Naive thymus-derived CD8-positive, alpha-beta T cell (primary cell): ENCODE measurements at regions of chr12 and their contacts with region 1.

Region 1: DNA sequence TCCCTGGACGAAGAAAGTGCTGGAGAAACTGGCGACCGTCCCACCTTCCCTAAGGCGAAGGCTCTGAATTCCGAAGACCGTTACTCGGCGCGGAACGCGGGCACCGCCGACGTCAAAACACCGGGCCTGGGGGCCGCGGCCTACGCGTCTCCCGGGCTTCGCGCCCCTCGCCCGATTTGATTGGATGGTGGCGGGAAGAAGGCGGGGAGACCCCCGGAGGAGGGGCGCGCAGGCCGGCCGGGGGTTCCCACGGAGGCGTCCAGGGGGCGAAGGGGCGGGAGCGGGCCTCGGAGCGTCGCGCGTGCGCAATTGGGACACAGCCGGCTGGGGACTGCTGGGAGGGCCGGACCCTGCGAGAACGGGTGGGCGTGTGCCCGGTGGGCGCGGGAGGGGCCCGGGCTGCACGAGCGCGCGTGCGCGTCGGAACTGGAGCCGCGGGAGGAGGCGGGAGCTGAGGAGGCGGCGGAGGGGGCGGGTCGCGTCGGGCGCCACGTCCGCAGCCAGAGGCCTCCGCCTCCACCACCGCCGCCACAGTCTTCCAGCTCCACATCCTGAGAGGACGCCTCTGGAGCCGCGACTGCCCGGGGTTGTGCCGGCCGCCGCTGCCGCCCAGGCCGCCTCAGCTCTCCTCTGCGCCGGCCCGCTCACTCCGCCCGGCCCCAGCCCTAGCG is at the start of gene TMEM263:
- DNase-seq: peak; percentile 90 to 96 (median 93)
- ATAC-seq: peak; percentile 76 to 79
- H3K4me3 Mint-ChIP-seq: peak within 1 kb of the TSS; percentile 94 to 100 (median 98)
- H3K27ac Mint-ChIP-seq: peak within 1 kb of the TSS; percentile 93 to 98 (median 97)
- H3K4me1 Mint-ChIP-seq: peaks cover 19 to 38% (median 30%) of the 10 kb centered on the region in 4 donors
- H3K27me3 Mint-ChIP-seq: no peaks in the 10 kb centered on the region
- polyA plus RNA-seq, gene TMEM263: 38.7 to 54.7 (median 38.9) TPM

Region 2: GRCh38 chr12:106357549-106358395 is 597.7 kb before region 1 on chr12 and contains the start of gene POLR3B:
- POLR2A ChIA-PET with region 1: interaction called, 16 read pairs
- DNase-seq: peak; percentile 90 to 100 (median 96)
- ATAC-seq: peak; percentile 93 to 94
- H3K4me3 Mint-ChIP-seq: peak within 1 kb of the TSS; percentile 82 to 97 (median 93)
- H3K27ac Mint-ChIP-seq: peak within 1 kb of the TSS; percentile 80 to 97 (median 93)
- H3K4me1 Mint-ChIP-seq: peaks cover 10 to 20% (median 19%) of the 10 kb centered on the region in 4 donors
- H3K27me3 Mint-ChIP-seq: peaks cover 0 to 3% (median 0%) of the 10 kb centered on the region in 5 donors
- polyA plus RNA-seq, gene POLR3B: 3.1 to 6.2 (median 4.2) TPM

Region 3: GRCh38 chr12:106981788-106982187 is 26.3 kb after region 1 on chr12:
- POLR2A ChIA-PET with region 1: interaction called, 26 read pairs
- DNase-seq: no peak
- ATAC-seq: no peak
- H3K4me3 Mint-ChIP-seq: no peak overlapping the region
- H3K27ac Mint-ChIP-seq: peak overlapping the region in 4 of 10 donors; percentile 36 to 75 (median 60)
- H3K4me1 Mint-ChIP-seq: peaks cover 35 to 41% (median 38%) of the 10 kb centered on the region in 4 donors
- H3K27me3 Mint-ChIP-seq: no peaks in the 10 kb centered on the region

Region 4: DNA sequence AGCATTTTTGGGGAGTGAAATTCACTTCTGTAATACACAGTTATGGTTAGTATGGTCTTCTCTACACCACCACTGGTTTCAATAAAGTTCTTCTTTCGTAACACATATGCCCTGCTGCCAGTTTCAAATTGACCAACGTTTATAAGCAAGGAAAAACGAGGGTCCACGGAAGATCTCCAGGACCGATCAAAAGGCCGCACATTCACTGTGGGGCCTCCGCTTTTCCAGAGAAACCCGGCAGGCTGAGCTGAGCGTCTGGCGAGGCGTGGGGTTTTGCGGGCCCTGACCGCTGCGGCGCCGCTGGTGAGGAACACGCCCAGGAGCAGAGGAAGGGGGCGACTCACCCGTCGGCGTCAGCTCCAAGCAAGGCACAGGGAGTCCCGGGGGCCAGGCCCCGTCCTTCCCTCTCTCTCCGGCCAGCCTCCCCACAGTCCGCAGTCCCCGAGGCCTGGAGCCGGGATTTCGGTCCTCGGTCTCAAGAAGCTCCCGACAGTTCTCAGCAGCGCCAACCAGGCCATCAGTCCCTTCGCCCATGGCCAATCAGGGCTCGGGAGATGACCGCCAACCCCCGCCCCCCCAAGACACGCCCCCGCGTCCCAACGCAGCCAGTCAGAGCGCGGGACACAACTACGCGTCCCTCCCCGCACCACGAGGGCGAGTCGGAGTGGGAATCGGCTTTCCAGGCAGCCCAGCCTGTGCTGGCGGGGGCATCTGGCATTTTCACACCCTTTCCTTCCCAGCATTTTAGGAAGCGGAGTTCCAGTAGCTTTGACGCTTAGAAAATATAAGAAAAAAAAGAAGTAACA is 31.3 kb after region 1 on chr12 and contains the start of gene MTERF2:
- POLR2A ChIA-PET with region 1: interaction called, 26 read pairs
- DNase-seq: peak; percentile 62 to 86 (median 74)
- ATAC-seq: peak; percentile 96 to 97
- H3K4me3 Mint-ChIP-seq: peak within 1 kb of the TSS; percentile 93 to 98 (median 96)
- H3K27ac Mint-ChIP-seq: peak within 1 kb of the TSS; percentile 68 to 95 (median 92)
- H3K4me1 Mint-ChIP-seq: peaks cover 35 to 47% (median 45%) of the 10 kb centered on the region in 4 donors
- H3K27me3 Mint-ChIP-seq: no peaks in the 10 kb centered on the region
- polyA plus RNA-seq, gene MTERF2: 4.4 to 9.3 (median 8.5) TPM

Region 5: DNA sequence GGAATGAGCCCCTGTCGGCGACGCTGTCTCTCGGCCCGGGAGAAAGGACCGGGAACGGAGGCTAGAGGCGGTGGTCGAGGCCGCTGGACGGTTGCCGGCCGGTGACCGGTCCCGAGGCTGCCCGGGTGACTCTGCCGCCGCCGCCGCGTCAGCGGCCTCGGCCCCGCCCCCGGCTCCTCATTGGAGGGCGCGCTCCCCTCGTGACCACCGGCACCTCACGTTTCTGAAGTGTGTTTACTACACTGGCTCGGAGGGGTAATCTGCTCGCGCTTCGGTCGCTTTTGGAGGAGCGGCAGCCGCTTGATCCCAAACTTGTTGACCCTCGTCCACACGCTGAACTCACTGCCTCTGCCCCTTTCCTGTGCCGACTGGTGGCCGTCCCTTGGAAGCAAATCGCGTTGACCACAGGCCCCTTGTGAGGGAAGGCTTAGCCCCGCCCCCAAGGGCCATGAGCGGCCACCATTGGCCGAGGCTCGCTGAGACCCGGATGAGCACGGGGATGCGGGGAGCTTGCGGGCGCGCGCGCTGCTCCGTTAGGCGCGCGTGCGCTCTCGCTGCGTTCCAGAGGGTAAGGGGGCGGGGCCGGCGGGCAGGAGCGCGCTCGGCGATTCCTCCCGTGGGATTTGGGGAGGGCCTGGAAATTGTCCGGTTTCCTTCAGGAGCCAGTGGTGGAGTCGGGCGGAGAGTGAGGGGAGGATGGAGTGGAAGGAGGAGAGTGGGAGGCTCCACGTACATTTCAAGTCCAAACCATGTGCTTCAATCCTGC is 138.1 kb after region 1 on chr12 and contains the start of gene CRY1:
- POLR2A ChIA-PET with region 1: interaction called, 16 read pairs
- DNase-seq: peak; percentile 85 to 99 (median 92)
- ATAC-seq: peak; percentile 82 to 84
- H3K4me3 Mint-ChIP-seq: no peak within 1 kb of the TSS
- H3K27ac Mint-ChIP-seq: peak within 1 kb of the TSS in 1 of 10 donors; percentile 100
- H3K4me1 Mint-ChIP-seq: peaks cover 0 to 20% (median 13%) of the 10 kb centered on the region in 4 donors
- H3K27me3 Mint-ChIP-seq: peaks cover 3 to 16% (median 9%) of the 10 kb centered on the region in 5 donors
- polyA plus RNA-seq, gene CRY1: 26.1 to 30.7 (median 26.5) TPM